CD4-positive, alpha-beta memory T cell (primary cell): ENCODE measurements at regions of chr6 and their contacts with region 1.

Region 1: DNA sequence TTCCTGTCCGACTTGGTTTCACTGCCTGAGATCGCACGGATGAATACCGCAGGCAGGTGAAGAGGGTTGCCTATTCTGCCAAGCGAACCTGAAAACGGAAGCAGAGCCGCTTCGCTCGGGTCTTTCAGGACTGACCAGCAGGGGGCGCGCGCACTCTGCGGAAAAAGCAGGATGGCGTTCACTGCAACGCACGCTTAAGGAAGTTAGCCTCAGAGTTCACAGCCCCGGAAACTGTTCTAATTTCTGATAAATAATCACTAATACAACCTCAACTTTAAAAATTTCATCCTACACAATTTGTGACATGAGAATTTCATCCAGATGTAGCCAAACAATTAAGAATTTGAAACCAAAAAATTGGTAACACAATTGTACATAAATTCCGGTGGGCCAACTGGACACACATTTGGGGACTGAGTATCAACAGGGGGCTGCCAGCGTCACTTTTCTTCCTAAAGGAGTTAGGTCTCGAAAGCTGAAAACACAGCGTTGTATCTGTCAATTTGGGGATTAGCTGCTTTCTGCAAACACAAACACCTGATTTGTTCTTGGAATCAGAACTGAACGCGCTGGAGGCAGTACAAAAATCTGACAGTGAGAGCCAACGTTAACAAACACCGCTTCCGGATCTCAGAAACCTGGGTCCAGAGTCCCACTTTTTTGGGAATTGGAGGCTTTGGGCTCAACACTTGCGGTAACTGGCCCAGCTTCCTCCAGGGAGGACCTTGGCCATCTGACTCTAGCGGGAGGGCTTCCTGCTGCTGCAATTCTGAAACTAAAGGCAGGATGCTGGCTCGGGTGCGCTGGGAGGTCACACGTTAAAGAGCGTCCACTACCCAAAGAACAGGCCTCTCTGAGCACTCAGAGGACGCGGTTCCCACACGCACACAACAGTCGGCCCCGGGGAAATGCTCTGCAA is 8.8 kb downstream of the PXDC1 start:
- DNase-seq: peak; percentile 79 to 84 (median 81)
- H3K4me3 ChIP-seq: peak overlapping the region in 1 of 2 donors; percentile 26
- H3K4me3 Mint-ChIP-seq: peak overlapping the region; percentile 4 to 77 (median 61)
- H3K27ac ChIP-seq: no peak overlapping the region
- H3K27ac Mint-ChIP-seq: peak overlapping the region in 5 of 7 donors; percentile 34 to 83 (median 68)
- H3K4me1 ChIP-seq: peaks cover 12% of the 10 kb centered on the region
- H3K4me1 Mint-ChIP-seq: peaks cover 6 to 13% (median 11%) of the 10 kb centered on the region in 4 donors
- H3K27me3 ChIP-seq: no peaks in the 10 kb centered on the region
- H3K27me3 Mint-ChIP-seq: peaks cover 3 to 4% of the 10 kb centered on the region in 2 donors

Region 2: DNA sequence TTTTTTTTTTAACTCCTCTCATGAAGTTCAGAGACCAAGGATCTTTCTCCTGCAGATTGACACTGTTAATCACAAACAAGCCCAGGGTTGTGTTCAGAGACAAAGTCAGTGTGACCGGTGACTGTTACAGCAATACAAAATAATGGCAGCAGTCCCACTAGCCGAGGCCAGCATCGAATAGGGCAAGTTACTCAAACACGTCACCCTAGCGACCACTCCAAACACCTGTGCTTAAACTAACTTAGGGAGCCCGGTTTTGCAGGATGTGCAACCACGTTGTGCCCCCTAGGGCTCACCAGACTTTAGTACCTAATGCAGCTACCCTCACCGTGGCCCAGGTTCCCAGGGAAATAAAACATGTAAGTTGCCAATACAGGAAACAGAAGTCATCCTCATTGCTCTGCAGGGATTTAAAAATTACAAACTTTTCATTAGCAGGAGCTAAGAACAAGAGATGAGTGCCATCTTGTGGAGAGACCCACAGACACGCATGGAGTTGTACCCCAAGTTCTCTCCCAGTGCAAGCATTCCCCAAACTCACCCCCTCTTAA is 144.5 kb after region 1 on chr6:
- CTCF ChIA-PET with region 1: interaction called, 9 read pairs
- POLR2A ChIA-PET with region 1: no interaction called
- intact Hi-C with region 1: loop called (anchors 1 kb)
- DNase-seq: peak in 2 of 5 donors; percentile 4 to 18
- H3K4me3 ChIP-seq: no peak overlapping the region
- H3K4me3 Mint-ChIP-seq: no peak overlapping the region
- H3K27ac ChIP-seq: no peak overlapping the region
- H3K27ac Mint-ChIP-seq: no peak overlapping the region
- H3K4me1 ChIP-seq: no peaks in the 10 kb centered on the region
- H3K4me1 Mint-ChIP-seq: peaks cover 0 to 3% (median 0%) of the 10 kb centered on the region in 4 donors
- H3K27me3 ChIP-seq: no peaks in the 10 kb centered on the region
- H3K27me3 Mint-ChIP-seq: no peaks in the 10 kb centered on the region

Region 3: DNA sequence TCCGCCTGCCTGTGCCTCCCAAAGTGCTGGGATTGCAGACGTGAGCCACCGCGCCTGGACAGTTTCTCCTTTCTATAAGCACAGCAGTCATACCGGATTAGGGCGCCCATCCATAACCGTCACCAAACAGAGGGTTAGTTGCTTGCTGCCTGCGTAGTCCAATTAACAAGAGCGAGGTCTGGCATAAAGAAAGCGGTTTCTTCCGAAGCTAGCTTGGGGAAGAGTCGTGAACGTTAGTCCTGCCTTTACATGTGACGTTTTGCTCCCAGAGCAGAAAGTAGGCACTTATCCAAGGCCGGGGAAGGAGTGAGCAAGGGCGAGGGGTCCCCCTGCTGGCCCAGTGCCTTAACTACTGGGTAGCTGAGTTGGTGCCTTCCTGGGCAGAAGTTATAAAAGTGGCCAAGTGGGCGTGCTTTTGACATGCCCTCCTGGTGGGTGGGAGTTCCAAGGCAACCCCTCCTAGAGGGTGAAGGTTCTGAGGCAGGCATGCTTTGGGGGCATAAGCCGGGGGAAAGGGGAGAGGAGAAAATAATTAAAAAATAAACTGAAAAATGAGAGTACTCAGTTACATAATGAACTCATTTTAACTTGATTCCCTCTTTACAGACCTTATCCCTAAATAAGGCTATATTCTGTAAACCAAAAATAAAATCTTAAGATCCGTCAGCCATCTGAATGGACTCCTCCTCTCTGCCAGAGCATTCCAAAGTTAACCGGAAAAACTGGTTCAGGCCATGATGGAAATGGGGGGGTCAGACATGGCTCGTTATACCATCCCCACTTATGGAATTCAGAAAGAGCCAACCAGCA is 248.2 kb after region 1 on chr6:
- CTCF ChIA-PET with region 1: interaction called, 13 read pairs
- POLR2A ChIA-PET with region 1: no interaction called
- intact Hi-C with region 1: loop called (anchors 1 kb)
- DNase-seq: peak; percentile 52 to 68 (median 58)
- H3K4me3 ChIP-seq: no peak overlapping the region
- H3K4me3 Mint-ChIP-seq: no peak overlapping the region
- H3K27ac ChIP-seq: no peak overlapping the region
- H3K27ac Mint-ChIP-seq: peak overlapping the region in 4 of 7 donors; percentile 33 to 91 (median 56)
- H3K4me1 ChIP-seq: peaks cover 8% of the 10 kb centered on the region
- H3K4me1 Mint-ChIP-seq: peaks cover 9 to 23% (median 14%) of the 10 kb centered on the region in 4 donors
- H3K27me3 ChIP-seq: no peaks in the 10 kb centered on the region
- H3K27me3 Mint-ChIP-seq: no peaks in the 10 kb centered on the region

Region 4: DNA sequence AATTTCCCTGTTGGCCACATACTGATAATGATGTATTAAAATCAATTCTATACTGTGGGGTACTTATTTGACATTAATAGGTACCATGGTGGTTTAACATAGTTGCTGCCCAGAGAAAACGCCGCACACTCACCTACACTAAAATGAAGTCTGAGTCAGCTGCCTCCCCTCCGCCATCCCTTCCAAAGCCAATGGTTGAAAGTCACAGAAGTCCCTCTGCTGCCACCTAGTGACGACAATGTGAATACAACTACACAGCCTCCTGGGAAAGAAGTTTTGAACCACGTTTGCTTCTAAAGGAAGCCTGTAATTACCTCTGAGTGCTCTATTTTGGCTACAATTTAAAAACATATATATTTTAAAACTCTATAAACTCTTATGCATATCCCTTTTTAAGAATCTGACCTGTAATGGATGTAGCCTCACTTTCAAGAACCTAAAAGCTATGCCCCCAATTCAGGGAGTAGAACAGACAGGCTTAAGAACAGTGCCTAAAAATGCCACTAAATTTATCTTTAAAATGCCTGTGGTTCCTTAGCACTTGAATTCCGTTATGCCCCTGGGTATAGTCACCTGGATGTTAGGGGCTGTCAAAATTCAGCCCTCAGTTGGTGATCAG is 413.3 kb after region 1 on chr6:
- CTCF ChIA-PET with region 1: interaction called, 24 read pairs
- POLR2A ChIA-PET with region 1: no interaction called
- intact Hi-C with region 1: loop called (anchors 1 kb)
- DNase-seq: peak; percentile 69 to 81 (median 73)
- H3K4me3 ChIP-seq: no peak overlapping the region
- H3K4me3 Mint-ChIP-seq: no peak overlapping the region
- H3K27ac ChIP-seq: no peak overlapping the region
- H3K27ac Mint-ChIP-seq: peak overlapping the region in 1 of 7 donors; percentile 25
- H3K4me1 ChIP-seq: no peaks in the 10 kb centered on the region
- H3K4me1 Mint-ChIP-seq: peaks cover 0 to 5% (median 2%) of the 10 kb centered on the region in 4 donors
- H3K27me3 ChIP-seq: no peaks in the 10 kb centered on the region
- H3K27me3 Mint-ChIP-seq: peaks cover 2 to 4% of the 10 kb centered on the region in 2 donors